ENCODE measurements at regions of chr1 and their contacts with region 1.

Region 1: GRCh38 chr1:184805667-184806295 is 51.1 kb upstream of the EDEM3 start:
- DNase-seq: peak; percentile 68
- H3K4me3 ChIP-seq: no peak overlapping the region
- H3K27ac ChIP-seq: no peak overlapping the region
- H3K27me3 ChIP-seq: no peaks in the 10 kb centered on the region
- CTCF ChIP-seq: peak; percentile 92

Region 2: DNA sequence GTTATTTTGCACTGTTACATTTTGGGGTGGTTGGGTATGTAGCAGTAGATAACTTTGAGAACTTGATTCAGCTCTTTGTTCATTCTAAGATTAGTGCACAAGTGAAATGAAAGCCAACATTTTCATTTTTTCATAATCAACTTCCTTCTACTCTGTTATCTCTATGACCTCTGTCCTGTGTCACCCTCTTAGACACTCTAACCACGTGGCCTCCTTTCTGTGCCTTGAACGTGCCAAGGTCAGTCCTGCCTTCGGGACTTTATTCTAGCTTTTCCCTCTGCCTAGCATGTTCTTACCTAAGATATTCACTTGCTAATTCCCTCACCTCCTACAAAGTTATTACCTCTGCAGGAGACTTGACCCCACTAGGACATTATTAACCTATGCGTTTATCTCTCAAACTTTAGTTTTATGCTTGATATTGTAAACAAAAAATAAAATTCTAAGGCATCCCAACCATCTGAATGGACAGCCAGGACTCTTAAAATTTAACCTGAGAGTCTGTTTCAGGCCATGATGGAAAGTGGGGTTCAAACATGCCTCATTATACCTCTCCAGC is 31.9 kb before region 1 on chr1:
- CTCF ChIA-PET with region 1: no interaction called
- POLR2A ChIA-PET with region 1: no interaction called
- DNase-seq: no peak
- H3K4me3 ChIP-seq: no peak overlapping the region
- H3K27ac ChIP-seq: no peak overlapping the region
- H3K27me3 ChIP-seq: no peaks in the 10 kb centered on the region
- CTCF ChIP-seq: no peak

Region 3: GRCh38 chr1:184792450-184792969 is 13.3 kb before region 1 on chr1:
- CTCF ChIA-PET with region 1: interaction called, 29 read pairs
- POLR2A ChIA-PET with region 1: no interaction called
- DNase-seq: peak; percentile 84
- H3K4me3 ChIP-seq: no peak overlapping the region
- H3K27ac ChIP-seq: peak overlapping the region; percentile 95
- H3K27me3 ChIP-seq: no peaks in the 10 kb centered on the region
- CTCF ChIP-seq: no peak

Region 4: GRCh38 chr1:184827600-184828368 is 22.0 kb after region 1 on chr1:
- CTCF ChIA-PET with region 1: interaction called, 15 read pairs
- POLR2A ChIA-PET with region 1: no interaction called
- DNase-seq: peak; percentile 32
- H3K4me3 ChIP-seq: no peak overlapping the region
- H3K27ac ChIP-seq: peak overlapping the region; percentile 65
- H3K27me3 ChIP-seq: no peaks in the 10 kb centered on the region
- CTCF ChIP-seq: no peak

Region 5: DNA sequence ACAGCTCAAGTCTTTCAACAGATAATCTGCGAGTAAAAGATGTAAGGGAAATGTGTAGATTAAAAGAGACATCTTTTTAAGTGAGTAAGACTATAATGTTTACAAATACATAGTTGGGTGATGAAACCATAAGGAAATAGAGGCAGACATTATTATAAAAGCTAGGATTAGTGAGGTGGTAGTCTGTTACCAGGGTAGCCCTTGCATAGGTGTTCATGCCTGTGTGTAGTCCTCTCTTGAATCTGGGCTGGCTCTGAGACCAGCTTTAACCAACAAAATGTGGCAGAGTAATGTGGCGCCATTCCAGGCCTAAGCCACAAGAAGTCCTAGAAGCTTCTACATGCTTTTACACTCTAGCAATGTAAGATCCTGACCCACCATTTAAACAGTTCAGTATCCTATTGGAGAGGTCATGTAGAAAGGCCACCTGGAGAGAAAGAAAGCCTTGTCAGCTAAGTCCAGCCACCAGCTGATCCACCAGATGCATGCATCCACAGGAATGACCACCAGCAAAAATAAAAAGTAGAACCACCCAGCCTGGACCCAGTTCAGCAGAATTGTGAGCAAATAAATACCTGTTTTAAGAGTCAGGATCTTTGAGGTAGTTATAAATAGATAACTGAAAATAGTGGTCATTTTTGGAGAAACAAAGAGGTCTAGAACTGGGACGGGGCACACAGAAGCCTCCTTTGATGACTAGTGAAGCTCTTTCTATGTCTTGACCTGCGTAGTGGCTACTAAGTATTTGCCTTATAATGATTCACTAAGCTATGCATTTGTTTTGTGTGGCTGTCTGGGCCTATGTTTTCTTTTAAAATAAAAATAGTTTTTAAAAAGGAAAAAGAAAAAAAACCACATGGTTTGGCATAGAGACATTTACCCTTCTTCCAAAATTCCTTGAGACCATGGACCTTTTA is 160.4 kb after region 1 on chr1:
- CTCF ChIA-PET with region 1: interaction called, 114 read pairs
- POLR2A ChIA-PET with region 1: interaction called, 3 read pairs
- DNase-seq: no peak
- H3K4me3 ChIP-seq: no peak overlapping the region
- H3K27ac ChIP-seq: peak overlapping the region; percentile 60
- H3K27me3 ChIP-seq: no peaks in the 10 kb centered on the region
- CTCF ChIP-seq: no peak

Region 6: DNA sequence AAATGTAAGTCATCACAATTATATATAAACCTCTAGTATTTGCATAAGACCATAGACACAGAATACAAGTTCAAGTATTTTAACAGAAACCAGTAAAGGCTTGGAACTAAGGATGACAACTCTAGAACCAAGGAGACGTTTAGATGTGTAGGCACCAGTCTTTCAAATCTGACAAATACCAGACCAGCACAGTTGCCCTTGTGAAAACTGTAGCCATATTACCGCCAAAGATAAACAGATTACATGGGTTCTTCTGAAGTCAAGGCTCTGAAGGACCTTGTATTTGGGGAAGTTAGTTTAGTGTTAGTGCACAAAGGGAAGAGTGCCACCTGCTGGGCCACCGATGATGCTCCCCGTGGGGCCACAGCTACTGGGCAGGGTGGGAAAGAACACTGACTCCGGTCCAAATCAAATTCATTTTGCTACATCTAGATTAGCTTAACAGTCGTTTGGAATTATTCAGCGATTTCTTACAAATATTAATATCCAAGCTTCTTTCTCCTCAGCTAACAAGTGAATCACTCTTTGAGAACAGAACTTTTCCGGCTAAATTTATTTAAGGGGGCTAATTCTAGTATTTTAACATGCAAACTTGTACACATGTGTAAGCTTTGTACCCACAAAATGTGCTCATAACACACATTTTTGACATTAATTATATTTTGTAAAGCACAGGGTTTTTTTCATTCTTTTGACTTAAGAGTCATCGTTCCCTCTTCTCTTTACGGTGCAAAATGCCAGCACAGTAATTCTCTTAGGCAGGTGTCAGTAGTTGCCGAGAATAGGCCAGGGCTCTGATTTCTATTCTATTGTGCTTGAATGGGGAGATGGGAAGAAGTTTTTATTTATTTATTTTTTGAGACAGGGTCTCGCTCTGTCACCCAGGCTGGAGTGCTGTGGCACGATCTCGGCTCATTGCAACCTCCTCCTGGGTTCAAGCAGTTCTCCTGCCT is 176.5 kb after region 1 on chr1:
- CTCF ChIA-PET with region 1: interaction called, 315 read pairs
- POLR2A ChIA-PET with region 1: no interaction called
- DNase-seq: peak; percentile 53
- H3K4me3 ChIP-seq: no peak overlapping the region
- H3K27ac ChIP-seq: no peak overlapping the region
- H3K27me3 ChIP-seq: no peaks in the 10 kb centered on the region
- CTCF ChIP-seq: peak; percentile 96

Region 7: GRCh38 chr1:185170291-185170848 is 364.6 kb after region 1 on chr1:
- CTCF ChIA-PET with region 1: interaction called, 44 read pairs
- POLR2A ChIA-PET with region 1: no interaction called
- DNase-seq: peak; percentile 23
- H3K4me3 ChIP-seq: no peak overlapping the region
- H3K27ac ChIP-seq: no peak overlapping the region
- H3K27me3 ChIP-seq: no peaks in the 10 kb centered on the region
- CTCF ChIP-seq: peak; percentile 77